Psoas muscle (tissue), 8 donors: ENCODE measurements at regions of chr9 and their contacts with region 1.

Region 1: DNA sequence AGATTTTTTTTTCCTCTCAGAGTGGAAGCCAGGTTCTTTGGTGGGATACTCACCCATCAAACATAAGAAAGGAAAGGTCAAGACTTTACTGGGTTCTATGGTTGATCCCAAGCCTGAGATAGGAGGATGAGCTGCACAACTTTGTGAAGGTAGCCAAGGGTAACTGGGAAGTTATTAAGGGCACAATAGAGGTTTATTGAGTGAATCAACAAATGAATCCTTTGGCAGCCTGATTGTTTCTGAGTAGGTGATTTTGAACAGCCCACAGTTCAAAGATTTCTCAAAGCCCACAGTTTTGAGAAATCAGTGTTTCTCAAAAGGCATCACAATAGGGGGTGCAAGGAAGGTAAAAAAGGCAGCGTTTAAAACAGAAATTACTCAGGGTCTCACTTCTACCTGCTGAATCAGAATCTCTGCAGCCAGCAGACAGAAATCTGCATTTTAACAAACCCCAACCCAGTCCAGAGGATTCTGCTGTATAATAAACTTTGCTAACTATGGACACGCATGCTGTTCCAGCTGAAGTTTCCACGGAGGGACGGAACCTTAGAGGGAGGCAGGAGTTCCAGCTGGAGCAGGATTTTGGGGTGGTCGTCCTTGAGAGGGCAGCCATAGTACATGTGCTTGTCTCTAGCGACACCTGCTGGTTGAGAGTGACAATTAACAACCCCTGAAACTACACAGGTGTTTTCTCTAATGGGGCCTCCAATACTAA is 32.7 kb upstream of the FSD1L start:
- DNase-seq: no peak
- ATAC-seq: peak; percentile 66 to 87 (median 76)
- H3K4me3 ChIP-seq: no peak overlapping the region
- H3K27ac ChIP-seq: no peak overlapping the region
- H3K4me1 ChIP-seq: no peaks in the 10 kb centered on the region
- H3K27me3 ChIP-seq: no peaks in the 10 kb centered on the region
- CTCF ChIP-seq: peak; percentile 90

Region 2: DNA sequence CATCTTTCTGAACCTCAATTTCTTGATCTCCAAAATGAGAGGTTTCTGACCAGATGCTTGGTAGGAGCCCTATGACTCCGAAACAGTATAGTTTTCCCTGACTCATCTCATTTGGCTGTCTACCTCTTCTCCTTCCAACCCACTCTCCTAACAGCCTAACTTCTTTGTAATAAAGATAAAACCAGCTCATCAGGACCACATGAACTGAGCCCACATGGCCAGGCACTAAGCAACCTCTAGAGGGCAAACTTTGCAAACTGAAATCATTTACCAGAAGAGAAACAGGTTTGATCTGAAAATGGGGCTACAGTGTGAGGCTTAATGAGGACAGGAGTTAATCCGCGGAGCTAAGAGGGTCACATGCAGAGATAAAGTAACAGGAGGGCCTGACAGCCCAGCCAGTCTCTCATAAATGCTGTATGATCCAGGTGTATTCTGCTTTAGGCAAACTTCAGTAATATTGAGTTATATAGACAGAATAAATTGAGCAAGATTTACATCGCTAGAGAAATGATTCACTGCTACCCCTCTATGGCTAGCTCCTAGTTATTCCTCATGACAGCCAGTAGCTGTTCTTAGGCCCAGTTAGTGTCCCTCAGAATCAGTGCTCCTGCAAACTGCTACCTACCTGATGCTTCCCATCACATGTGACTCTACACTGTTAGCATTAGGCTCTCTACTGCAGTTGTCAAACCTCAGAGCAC is 551.8 kb before region 1 on chr9:
- intact Hi-C with region 1: loop called (anchors 2 to 5 kb)
- DNase-seq: no peak
- ATAC-seq: peak; percentile 45 to 87 (median 75)
- H3K4me3 ChIP-seq: no peak overlapping the region
- H3K27ac ChIP-seq: peak overlapping the region; percentile 40
- H3K4me1 ChIP-seq: peaks cover 37% of the 10 kb centered on the region
- H3K27me3 ChIP-seq: no peaks in the 10 kb centered on the region
- CTCF ChIP-seq: peak; percentile 79

Region 3: DNA sequence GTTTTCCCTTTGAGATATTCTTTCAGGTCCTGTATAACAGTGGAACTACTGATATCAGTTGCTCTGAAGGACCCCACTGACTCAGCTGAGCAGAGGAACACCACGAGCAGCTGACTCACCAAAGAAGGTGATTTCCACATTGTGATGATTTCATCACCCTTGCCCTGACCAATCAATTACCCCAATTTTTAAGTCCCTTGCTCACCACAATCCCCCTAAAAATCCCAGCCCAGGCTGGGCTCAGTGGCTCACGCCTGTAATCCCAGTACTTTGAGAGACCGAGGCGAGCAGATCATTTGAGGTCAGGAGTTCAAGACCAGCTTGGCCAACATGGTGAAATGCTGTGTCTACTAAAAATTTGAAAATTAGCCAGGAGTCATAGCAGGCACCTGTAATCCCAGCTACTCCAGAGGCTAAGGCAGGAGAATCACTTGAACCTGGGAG is 361.9 kb before region 1 on chr9:
- intact Hi-C with region 1: loop called in 1 of 2 experiments (anchors 10 kb)
- DNase-seq: peak; percentile 30 to 49
- ATAC-seq: peak; percentile 30 to 78 (median 74)
- H3K4me3 ChIP-seq: no peak overlapping the region
- H3K27ac ChIP-seq: no peak overlapping the region
- H3K4me1 ChIP-seq: no peaks in the 10 kb centered on the region
- H3K27me3 ChIP-seq: no peaks in the 10 kb centered on the region
- CTCF ChIP-seq: no peak

Region 4: DNA sequence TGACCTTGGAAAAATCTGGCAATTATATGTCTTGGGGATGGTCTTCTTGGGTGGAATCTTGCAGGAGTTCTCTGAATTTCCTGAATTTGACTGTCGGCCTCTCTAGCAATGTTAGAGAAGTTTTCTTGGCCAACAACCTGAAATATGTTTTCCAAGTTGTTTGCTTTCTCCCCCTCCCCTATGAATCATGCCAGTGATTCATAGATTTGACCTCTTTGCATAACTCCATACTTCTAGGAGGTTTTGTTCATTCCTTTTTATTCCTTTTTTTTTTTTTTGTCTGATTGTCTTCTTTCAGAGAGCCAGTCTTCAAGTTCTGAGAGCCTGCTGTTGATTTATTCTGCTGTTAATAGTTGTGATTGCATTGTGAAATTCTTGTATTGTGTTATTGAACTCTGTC is 227.3 kb before region 1 on chr9:
- intact Hi-C with region 1: loop called in 1 of 2 experiments (anchors 10 kb)
- DNase-seq: no peak
- ATAC-seq: no peak
- H3K4me3 ChIP-seq: no peak overlapping the region
- H3K27ac ChIP-seq: no peak overlapping the region
- H3K4me1 ChIP-seq: no peaks in the 10 kb centered on the region
- H3K27me3 ChIP-seq: no peaks in the 10 kb centered on the region
- CTCF ChIP-seq: no peak

Region 5: GRCh38 chr9:105280691-105281090 is 134.4 kb before region 1 on chr9:
- intact Hi-C with region 1: no loop called
- DNase-seq: no peak
- ATAC-seq: no peak
- H3K4me3 ChIP-seq: no peak overlapping the region
- H3K27ac ChIP-seq: no peak overlapping the region
- H3K4me1 ChIP-seq: no peaks in the 10 kb centered on the region
- H3K27me3 ChIP-seq: no peaks in the 10 kb centered on the region
- CTCF ChIP-seq: no peak

Region 6: DNA sequence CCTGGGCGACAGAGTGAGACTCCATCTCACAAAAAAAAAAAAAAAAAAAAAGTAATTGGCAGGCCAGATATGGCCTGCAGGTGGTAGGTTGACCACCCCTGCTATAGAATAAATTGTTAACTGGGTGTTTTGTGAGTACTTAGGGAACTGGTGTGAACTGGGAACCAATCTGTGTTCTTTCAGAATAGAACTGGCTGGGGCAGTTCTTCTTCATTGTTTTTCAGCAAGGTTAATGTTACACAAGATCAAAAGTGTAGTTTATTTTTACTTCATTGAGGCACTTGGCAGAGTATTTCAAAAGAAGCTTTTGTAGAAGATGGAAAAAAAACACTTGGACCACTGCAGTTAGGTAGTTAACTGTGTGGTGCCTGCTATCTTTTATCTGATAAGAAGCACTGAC is 43.4 kb before region 1 on chr9:
- intact Hi-C with region 1: no loop called
- DNase-seq: no peak
- ATAC-seq: no peak
- H3K4me3 ChIP-seq: no peak overlapping the region
- H3K27ac ChIP-seq: no peak overlapping the region
- H3K4me1 ChIP-seq: no peaks in the 10 kb centered on the region
- H3K27me3 ChIP-seq: no peaks in the 10 kb centered on the region
- CTCF ChIP-seq: no peak